ENCODE measurements at regions of chr4 and their contacts with region 1.

Region 1: GRCh38 chr4:26150948-26151347 is 169.9 kb upstream of the RBPJ start:
- DNase-seq: no peak
- H3K4me3 Mint-ChIP-seq: no peak overlapping the region
- H3K27ac Mint-ChIP-seq: peak overlapping the region; percentile 92
- H3K4me1 Mint-ChIP-seq: peaks cover 43% of the 10 kb centered on the region
- H3K27me3 Mint-ChIP-seq: no peaks in the 10 kb centered on the region

Region 2: DNA sequence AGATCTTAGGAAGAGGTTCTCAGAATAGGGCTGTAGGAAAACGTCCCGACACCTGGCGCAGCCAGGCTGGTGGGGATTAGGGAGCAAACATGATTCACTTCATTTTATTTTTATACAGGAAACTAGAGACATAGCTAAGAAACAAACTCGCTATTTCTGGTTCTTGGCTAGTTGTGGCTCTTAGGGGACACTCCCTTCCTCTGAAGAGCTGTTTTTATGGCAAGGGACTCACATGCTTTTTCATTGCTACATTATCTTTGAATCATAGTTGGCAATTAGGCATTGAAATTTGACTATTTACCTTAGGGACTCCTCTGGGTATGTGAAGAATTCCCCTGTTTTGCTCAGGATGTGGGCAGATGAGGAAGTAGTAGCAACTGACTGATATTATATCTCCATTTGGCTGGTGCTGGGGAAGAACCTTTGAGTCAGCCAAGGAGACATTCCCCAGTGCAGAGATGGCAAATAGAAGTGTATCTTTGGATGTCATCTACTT is 62.5 kb before region 1 on chr4:
- intact Hi-C with region 1: loop called (anchors 1 kb)
- DNase-seq: peak; percentile 77
- H3K4me3 Mint-ChIP-seq: peak overlapping the region; percentile 80
- H3K27ac Mint-ChIP-seq: peak overlapping the region; percentile 99
- H3K4me1 Mint-ChIP-seq: peaks cover 68% of the 10 kb centered on the region
- H3K27me3 Mint-ChIP-seq: no peaks in the 10 kb centered on the region

Region 3: DNA sequence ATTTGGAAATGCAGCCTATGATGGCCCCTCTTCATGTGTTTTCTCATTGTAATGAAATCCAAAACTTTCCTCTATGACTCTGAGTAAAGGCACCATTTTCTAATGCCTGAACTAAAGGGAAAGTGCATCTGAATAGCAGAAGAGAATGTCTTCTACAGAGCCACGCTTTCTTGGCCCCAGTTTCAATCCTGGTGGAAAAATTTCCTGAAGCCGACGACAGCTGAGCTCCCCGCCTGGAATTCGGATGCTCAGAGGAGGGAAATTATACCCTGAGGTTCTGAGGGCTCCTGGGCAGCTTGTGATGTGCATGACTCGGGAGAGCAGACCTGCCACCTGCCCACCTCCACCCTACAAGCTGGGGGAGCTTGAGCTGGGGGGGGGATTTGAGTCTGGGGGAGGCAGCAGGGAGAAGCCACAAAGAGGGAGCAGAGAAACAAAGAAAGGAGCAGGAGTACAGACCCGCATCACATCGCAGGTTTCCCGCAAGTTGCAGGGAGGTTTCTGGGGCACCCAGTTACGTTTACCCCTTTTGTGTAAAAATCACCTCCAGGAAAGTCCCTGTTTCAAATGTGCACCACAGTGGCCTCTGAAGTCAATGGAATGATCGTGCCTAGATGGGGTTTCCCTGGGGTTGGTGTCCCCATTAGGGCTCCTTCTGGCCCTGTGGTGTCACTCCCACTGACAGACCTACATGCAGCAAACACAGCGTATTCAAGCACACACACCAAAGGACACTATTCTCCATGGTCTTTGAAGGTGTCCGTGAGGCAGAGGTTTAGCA is 24.2 kb after region 1 on chr4:
- intact Hi-C with region 1: loop called (anchors 1 kb)
- DNase-seq: peak; percentile 75
- H3K4me3 Mint-ChIP-seq: peak overlapping the region; percentile 40
- H3K27ac Mint-ChIP-seq: peak overlapping the region; percentile 90
- H3K4me1 Mint-ChIP-seq: peaks cover 26% of the 10 kb centered on the region
- H3K27me3 Mint-ChIP-seq: no peaks in the 10 kb centered on the region